HepG2 (cell line): ENCODE measurements at regions of chr11 and their contacts with region 1.

Region 1: DNA sequence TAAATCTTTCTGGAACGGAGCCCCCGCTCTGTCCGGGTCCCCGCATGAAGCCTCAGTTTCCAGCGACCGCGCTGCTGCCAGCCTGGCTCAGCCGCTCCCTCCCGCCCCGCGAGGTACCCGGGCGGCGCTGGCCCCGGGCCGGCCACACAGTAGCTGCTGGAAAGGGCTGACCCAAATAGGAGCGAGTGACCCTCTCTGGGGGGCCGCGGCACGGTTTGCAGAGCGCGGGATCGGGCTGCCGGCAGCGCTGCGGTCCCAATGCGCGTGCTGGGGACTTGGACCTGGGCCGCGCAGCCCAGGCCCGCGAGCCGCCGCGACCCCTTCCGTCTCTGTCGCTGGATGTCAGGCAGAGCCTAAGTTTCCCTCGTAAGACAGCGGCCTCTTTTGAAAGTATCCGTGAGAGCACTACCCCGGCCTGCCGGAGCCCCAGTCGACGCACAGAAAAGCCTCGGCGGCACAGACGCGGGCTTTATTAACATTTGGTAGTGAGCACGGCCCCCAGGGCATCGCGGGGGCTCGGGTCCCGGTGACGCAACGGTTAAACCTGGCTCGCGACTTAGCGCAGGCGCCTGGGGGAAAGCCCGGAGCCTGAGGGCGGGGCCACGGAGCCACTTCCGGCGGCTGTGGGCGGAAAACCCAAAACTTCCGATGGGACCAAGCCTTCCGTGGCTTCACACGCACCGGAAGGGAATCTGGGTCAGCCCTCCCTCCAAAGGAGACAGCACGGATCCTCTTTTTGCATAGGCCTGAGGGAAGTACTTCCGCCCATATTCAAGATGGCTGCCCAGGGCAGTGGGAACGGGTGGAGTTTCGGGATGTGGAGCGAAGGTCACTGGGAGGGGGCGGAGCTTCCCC is 14.9 kb downstream of the BAD start:
- DNase-seq: peak; percentile 99
- ATAC-seq: peak; percentile 85
- H3K4me3 ChIP-seq: peak overlapping the region; percentile 71 to 90 (median 89)
- H3K27ac ChIP-seq: peak overlapping the region; percentile 95
- H3K4me1 ChIP-seq: peaks cover 38% of the 10 kb centered on the region
- H3K27me3 ChIP-seq: no peaks in the 10 kb centered on the region
- CTCF ChIP-seq: peak; percentile 29; the same call in 1 of the 2 replicates
- EP300 ChIP-seq: no peak; a peak in 2 of 4 replicates
- POLR2A ChIP-seq: no peak
- RAD21 ChIP-seq: peak; percentile 21; the same call in 1 of the 2 replicates

Region 2: DNA sequence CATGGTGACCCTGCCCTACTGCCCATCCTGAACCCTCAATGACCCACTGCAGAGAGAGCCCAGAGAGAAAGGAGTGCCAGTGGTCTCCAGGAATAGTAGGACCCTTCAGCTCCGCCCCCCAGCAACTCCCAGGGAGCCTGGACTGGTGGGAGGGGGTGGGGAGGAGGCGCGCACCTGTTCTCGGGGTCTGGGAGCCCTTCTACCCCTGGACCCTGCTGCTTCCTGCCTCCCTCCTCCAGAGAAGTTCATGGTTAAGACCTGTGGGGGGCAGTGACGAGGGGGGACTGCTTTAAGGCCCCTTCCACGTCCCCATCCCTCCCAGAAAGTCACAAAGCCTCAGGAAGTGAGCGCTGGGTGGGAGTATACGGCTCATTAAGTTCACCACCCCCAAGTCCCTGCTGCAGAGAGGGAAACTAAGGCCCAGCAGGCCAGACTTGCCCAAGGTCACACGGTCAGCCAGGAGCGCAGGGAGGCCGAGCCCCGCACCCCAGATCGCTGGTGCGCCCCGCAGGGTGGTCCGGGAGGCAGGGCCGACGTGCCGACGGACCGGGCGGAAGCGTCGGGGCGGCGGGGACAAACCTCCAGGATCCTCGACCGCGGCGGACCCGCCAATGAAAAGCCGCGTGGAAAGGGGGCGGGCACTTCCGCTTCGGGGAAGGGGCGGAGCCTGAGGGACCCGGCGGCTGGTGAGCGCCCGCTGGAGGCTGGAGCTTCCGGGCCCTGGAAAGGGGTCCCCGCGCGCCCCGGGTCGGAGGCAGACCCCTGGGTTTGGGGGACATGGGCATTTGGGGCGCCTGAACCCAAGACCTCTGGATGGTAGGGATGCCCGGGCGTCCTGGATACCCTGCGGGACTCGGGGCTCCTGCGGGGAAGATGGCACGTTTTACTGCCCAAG is 43.7 kb before region 1 on chr11 and contains the starts of genes NUDT22 and TRPT1:
- CTCF ChIA-PET with region 1: no interaction called
- POLR2A ChIA-PET with region 1: interaction called, 21 read pairs
- in situ Hi-C with region 1: no loop called
- intact Hi-C with region 1: no loop called
- DNase-seq: peak; percentile 77
- ATAC-seq: peak; percentile 78
- H3K4me3 ChIP-seq: peak within 1 kb of the TSS; percentile 78 to 96 (median 82)
- H3K27ac ChIP-seq: peak within 1 kb of the TSS; percentile 56
- H3K4me1 ChIP-seq: peaks cover 34% of the 10 kb centered on the region
- H3K27me3 ChIP-seq: no peaks in the 10 kb centered on the region
- CTCF ChIP-seq: peak; percentile 65
- EP300 ChIP-seq: no peak
- POLR2A ChIP-seq: peak in 1 of 2 experiments; percentile 9; a peak in 1 of 4 replicates
- RAD21 ChIP-seq: no peak
- total RNA-seq, gene NUDT22: 38.5 and 39.8 TPM in 2 replicates
- total RNA-seq, gene TRPT1: 21.0 and 24.8 TPM in 2 replicates

Region 3: GRCh38 chr11:64246871-64247728 is 22.5 kb before region 1 on chr11 and contains the start of gene PPP1R14B:
- CTCF ChIA-PET with region 1: no interaction called
- POLR2A ChIA-PET with region 1: interaction called, 113 read pairs
- in situ Hi-C with region 1: no loop called
- intact Hi-C with region 1: loop called (anchors 2 kb)
- DNase-seq: peak; percentile 80
- ATAC-seq: peak; percentile 71
- H3K4me3 ChIP-seq: peak within 1 kb of the TSS; percentile 79 to 95 (median 84)
- H3K27ac ChIP-seq: peak within 1 kb of the TSS; percentile 83
- H3K4me1 ChIP-seq: peaks cover 69% of the 10 kb centered on the region
- H3K27me3 ChIP-seq: no peaks in the 10 kb centered on the region; a peak in 1 of 5 replicates
- CTCF ChIP-seq: no peak; the same call in none of the 2 replicates
- EP300 ChIP-seq: no peak
- POLR2A ChIP-seq: peak in 1 of 2 experiments; percentile 44; a peak in 1 of 4 replicates
- RAD21 ChIP-seq: no peak
- total RNA-seq, gene PPP1R14B: 120 and 148 TPM in 2 replicates

Region 4: GRCh38 chr11:64284048-64284961 is 14.7 kb after region 1 on chr11 and contains the start of gene BAD:
- CTCF ChIA-PET with region 1: no interaction called
- POLR2A ChIA-PET with region 1: interaction called, 48 read pairs
- in situ Hi-C with region 1: no loop called
- intact Hi-C with region 1: loop called (anchors 2 kb)
- DNase-seq: peak; percentile 86
- ATAC-seq: peak; percentile 92
- H3K4me3 ChIP-seq: peak within 1 kb of the TSS; percentile 69 to 97 (median 83)
- H3K27ac ChIP-seq: peak within 1 kb of the TSS; percentile 79
- H3K4me1 ChIP-seq: peaks cover 22% of the 10 kb centered on the region; the same call in 1 of the 2 replicates
- H3K27me3 ChIP-seq: no peaks in the 10 kb centered on the region; a peak in 1 of 5 replicates
- CTCF ChIP-seq: no peak
- EP300 ChIP-seq: no peak
- POLR2A ChIP-seq: peak in 1 of 2 experiments; percentile 10; a peak in 2 of 4 replicates
- RAD21 ChIP-seq: no peak
- total RNA-seq, gene BAD: 28.5 and 33.0 TPM in 2 replicates

Region 5: DNA sequence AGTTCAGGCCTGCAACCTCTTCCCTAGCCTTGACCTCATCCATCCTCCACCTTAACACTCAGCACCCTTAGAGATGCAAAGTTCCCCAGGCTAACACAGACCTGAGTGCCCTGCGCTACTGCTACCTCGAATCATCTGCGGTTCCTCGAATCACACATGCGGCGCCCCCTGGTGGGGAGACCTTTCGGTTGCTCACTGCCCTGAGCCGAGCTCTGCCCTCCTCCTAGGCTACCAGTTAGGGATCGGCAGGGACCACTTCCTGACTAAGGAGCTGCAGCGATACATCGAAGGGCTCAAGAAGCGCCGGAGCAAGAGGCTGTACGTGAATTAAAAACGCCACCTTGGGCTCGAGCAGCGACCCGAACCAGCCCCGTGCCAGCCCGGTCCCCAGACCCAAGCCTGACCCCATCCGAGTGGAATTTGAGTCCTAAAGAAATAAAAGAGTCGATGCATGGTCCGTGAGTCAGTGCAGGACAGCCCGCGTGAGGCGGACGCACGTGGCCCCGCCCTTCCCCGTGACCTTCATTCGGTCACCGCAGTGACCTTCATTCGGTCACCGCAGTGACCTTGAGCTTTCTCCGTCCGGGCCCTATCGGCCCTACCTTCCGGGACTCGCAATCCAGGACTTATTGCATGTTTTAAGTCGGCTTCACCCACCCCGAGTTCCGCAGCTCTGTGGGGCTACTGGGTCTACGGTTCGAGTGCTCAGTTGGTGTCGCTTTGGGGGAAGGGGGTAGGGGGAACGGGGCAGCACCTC is 34.9 kb after region 1 on chr11:
- CTCF ChIA-PET with region 1: interaction called, 12 read pairs
- POLR2A ChIA-PET with region 1: interaction called, 46 read pairs
- in situ Hi-C with region 1: no loop called
- intact Hi-C with region 1: loop called (anchors 2 kb)
- DNase-seq: peak; percentile 80
- ATAC-seq: peak; percentile 55
- H3K4me3 ChIP-seq: peak overlapping the region; percentile 51 to 79 (median 70)
- H3K27ac ChIP-seq: peak overlapping the region; percentile 94
- H3K4me1 ChIP-seq: peaks cover 66% of the 10 kb centered on the region
- H3K27me3 ChIP-seq: peaks cover 3 to 13% of the 10 kb centered on the region in 2 experiments; a peak in 4 of 5 replicates
- CTCF ChIP-seq: peak; percentile 95
- EP300 ChIP-seq: no peak
- POLR2A ChIP-seq: peak in 1 of 2 experiments; percentile 62; a peak in 2 of 4 replicates
- RAD21 ChIP-seq: peak; percentile 48; the same call in 1 of the 2 replicates

Region 6: GRCh38 chr11:64331557-64332371 is 62.2 kb after region 1 on chr11:
- CTCF ChIA-PET with region 1: no interaction called
- POLR2A ChIA-PET with region 1: interaction called, 10 read pairs
- in situ Hi-C with region 1: no loop called
- intact Hi-C with region 1: no loop called
- DNase-seq: peak; percentile 69
- ATAC-seq: peak; percentile 91
- H3K4me3 ChIP-seq: peak overlapping the region; percentile 1 to 68 (median 5); a peak in 5 of 6 replicates
- H3K27ac ChIP-seq: no peak overlapping the region
- H3K4me1 ChIP-seq: peaks cover 27% of the 10 kb centered on the region
- H3K27me3 ChIP-seq: peaks cover 3 to 7% of the 10 kb centered on the region in 2 experiments; a peak in 3 of 5 replicates
- CTCF ChIP-seq: peak; percentile 79
- EP300 ChIP-seq: no peak
- POLR2A ChIP-seq: no peak
- RAD21 ChIP-seq: peak; percentile 75